IMR-90 (cell line): ENCODE measurements at regions of chr15 and their contacts with region 1.

Region 1: DNA sequence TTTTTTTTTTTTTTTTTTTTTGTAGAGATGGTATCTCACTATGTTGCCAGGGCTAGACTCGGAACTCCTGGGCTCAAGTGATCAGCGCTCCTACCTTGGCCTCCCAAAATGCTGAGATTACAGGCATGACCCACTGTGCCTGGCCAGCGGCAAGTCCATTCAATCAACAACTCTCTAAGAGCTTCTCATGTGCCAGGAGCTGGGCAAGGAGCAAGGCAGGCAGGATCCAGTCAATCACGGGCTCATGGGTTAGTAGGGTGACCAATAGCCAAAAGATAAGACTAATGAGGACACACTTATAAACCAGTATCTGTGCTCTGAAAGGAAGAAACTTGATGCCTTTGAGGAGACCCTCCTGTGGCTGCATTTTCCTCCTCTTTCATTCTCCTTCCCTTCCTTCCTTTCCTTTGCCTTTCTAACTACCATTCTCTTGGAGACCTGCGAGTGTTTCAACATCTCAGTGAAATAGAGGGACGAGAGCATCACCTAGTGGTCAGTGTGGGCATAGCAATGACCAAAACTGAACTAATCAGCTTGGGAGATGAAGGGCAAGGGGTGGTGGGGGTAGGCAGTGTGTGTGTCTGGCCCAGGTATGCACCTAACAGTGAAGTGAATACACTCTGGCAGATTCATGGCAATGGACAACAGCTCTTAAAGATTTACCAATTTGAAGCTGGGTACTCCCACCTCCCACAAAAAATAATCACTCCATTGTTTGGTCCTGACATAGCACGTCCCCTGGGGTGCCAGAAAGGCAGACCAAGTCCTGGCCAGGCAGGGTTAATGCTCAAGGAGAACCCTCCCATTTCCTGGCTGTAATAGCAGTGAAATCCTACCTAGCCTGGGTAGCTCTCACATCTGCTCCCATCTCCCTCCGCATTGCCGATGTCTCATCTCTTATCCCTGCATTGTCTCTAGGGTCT is 6.2 kb downstream of the RPP25 start:
- DNase-seq: peak; percentile 67
- ATAC-seq: peak; percentile 70
- H3K4me3 ChIP-seq: no peak overlapping the region
- H3K27ac ChIP-seq: no peak overlapping the region
- H3K4me1 ChIP-seq: peaks cover 5% of the 10 kb centered on the region; the same call in 1 of the 2 replicates
- H3K27me3 ChIP-seq: peaks cover 3% of the 10 kb centered on the region
- CTCF ChIP-seq: peak; percentile 97
- POLR2A ChIP-seq: no peak; the same call in 1 of the 2 replicates
- RAD21 ChIP-seq: peak; percentile 94

Region 2: DNA sequence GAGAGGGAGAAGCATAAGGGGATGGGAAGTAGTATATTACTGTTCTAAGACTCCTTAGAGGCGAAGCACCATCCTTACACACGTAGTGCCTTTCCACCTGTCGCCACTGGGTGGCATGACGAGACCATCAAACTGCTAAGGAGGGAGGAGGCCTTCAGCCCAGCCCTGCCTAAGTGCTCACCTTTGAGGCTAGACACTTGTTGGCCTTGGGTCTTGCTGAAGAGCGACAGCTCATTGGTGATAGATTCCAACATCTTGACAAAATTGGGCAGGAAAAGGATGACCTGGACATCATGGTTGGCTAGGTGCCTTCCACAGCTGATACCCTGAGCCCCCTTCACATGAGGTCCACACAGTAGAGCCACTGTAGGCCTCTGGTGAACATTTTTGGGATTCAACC is 315.1 kb before region 1 on chr15:
- CTCF ChIA-PET with region 1: interaction called, 3 read pairs
- POLR2A ChIA-PET with region 1: no interaction called
- dilution Hi-C with region 1: no loop called
- in situ Hi-C with region 1: loop called (anchors 5 kb)
- intact Hi-C with region 1: loop called (anchors 5 kb)
- DNase-seq: peak; percentile 61
- ATAC-seq: peak; percentile 85
- H3K4me3 ChIP-seq: no peak overlapping the region
- H3K27ac ChIP-seq: no peak overlapping the region
- H3K4me1 ChIP-seq: no peaks in the 10 kb centered on the region
- H3K27me3 ChIP-seq: no peaks in the 10 kb centered on the region
- CTCF ChIP-seq: peak; percentile 82
- POLR2A ChIP-seq: no peak
- RAD21 ChIP-seq: peak; percentile 90

Region 3: DNA sequence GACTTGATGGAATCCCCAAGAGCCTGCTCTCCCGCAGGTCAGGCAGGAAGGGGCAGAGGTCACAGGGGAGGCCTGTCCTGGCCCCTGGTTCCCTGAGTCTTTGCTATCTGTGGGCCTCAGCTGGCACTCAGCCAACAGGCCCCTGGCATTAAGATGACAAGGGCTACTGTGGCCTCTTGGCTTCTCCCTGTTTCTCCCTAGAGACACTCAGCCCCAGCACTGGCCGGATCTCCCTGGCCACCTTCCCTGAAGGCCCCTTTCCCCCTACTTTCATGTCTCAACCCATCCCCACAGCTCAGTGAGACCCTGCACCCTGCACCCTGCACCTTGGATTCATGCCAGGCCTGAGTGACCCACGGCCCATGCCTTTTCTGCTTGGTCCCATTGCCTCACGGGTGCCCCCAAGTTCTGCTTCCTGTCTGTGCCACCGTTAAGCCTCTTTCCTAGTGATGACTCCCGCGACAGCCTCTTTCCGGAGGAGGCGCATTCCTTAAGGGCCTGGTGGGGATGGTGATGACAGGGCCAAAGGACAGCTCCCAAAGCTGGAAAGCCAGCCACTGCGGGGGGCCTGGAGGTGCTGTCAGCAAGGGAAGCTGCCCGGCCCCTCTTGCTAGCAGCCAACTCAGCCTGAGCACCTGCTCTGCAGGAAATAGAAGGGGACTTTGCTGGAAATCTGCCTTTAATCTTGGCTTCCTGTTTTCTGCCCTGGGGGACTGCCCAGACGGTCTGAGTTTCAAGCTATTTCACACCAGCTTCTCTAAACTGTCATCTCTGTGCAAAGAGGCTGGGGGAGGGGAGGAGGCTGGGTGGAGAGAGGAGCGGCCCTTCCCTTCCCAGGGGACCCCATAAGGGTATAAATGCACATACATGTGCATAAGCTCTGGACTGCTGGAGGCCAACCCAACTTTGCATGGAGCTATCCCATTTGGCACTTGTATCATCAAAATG is 173.2 kb before region 1 on chr15:
- CTCF ChIA-PET with region 1: interaction called, 9 read pairs
- POLR2A ChIA-PET with region 1: no interaction called
- dilution Hi-C with region 1: no loop called
- in situ Hi-C with region 1: loop called (anchors 5 kb)
- intact Hi-C with region 1: no loop called
- DNase-seq: no peak
- ATAC-seq: no peak
- H3K4me3 ChIP-seq: no peak overlapping the region
- H3K27ac ChIP-seq: no peak overlapping the region
- H3K4me1 ChIP-seq: peaks cover 4% of the 10 kb centered on the region
- H3K27me3 ChIP-seq: no peaks in the 10 kb centered on the region
- CTCF ChIP-seq: no peak
- POLR2A ChIP-seq: no peak
- RAD21 ChIP-seq: no peak

Region 4: DNA sequence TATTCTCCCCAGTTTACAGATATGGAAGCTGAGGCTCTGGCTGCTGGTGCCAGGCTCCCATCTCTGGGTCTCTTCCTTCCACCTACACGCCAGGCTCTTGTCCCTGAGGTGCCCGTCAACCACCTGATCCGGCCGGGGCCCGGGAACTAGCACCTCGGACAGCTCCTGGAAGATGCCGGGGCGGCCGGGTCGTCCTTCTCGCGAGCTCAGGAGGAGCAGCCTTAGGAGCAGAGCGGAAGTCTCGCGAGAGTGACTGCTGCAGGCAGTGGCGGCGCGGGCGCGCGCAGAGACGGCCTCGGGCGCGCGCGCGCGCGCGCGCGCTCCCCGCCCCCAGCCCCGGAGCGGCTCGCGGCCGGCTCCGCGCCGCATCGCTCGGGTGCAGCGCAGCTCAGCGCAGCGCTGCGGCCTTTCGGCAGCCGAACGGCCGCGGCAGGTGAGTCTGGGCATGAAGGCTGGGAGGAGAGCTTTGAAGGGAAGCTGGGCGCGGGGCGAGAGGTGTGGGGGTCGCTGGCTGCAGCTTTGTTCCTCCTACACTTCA is 45.0 kb after region 1 on chr15 and contains the start of gene SCAMP5:
- CTCF ChIA-PET with region 1: no interaction called
- POLR2A ChIA-PET with region 1: no interaction called
- dilution Hi-C with region 1: no loop called
- in situ Hi-C with region 1: no loop called
- intact Hi-C with region 1: no loop called
- DNase-seq: peak; percentile 93
- ATAC-seq: peak; percentile 100
- H3K4me3 ChIP-seq: peak within 1 kb of the TSS; percentile 72
- H3K27ac ChIP-seq: no peak within 1 kb of the TSS
- H3K4me1 ChIP-seq: no peaks in the 10 kb centered on the region
- H3K27me3 ChIP-seq: peaks cover 26% of the 10 kb centered on the region
- CTCF ChIP-seq: no peak
- POLR2A ChIP-seq: no peak
- RAD21 ChIP-seq: no peak
- total RNA-seq, gene SCAMP5: 0.36 and 0.56 TPM in 2 replicates

Region 5: GRCh38 chr15:75738647-75739331 is 788.5 kb after region 1 on chr15:
- CTCF ChIA-PET with region 1: no interaction called
- POLR2A ChIA-PET with region 1: no interaction called
- dilution Hi-C with region 1: no loop called
- in situ Hi-C with region 1: no loop called
- intact Hi-C with region 1: no loop called
- DNase-seq: peak; percentile 87
- ATAC-seq: peak; percentile 100
- H3K4me3 ChIP-seq: peak overlapping the region; percentile 60
- H3K27ac ChIP-seq: no peak overlapping the region; the same call in 1 of the 2 replicates
- H3K4me1 ChIP-seq: 0 out of 2 replicates have a peak, but pooled peaks cover 1% of the 10 kb centered on the region
- H3K27me3 ChIP-seq: peaks cover 8% of the 10 kb centered on the region
- CTCF ChIP-seq: no peak
- POLR2A ChIP-seq: no peak
- RAD21 ChIP-seq: no peak